ENCODE measurements at regions of chr14 and their contacts with region 1.

Region 1: DNA sequence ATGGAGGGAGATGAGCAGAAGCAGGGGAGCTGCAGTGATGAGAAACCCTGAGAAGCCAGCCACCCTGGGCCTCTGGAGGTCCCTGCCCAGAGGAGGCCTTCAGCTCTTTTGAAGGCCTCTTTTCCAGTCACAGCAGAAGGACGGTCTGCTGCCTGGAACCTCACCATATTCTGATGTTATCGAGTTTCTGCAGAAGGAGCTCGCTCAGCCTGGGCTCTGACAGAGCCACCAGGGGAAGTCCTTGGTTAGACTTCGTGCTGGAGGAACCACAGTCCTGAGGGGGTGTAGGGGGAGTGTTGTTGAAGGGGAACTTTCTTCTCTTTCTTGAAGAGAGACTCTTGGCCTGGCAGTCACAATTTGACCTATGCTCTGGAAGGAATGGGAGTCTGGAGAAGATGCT is 25.1 kb upstream of the BATF start:
- DNase-seq: no peak
- H3K4me3 Mint-ChIP-seq: no peak overlapping the region
- H3K27ac Mint-ChIP-seq: peak overlapping the region; percentile 76
- H3K4me1 Mint-ChIP-seq: peaks cover 44% of the 10 kb centered on the region
- H3K27me3 Mint-ChIP-seq: no peaks in the 10 kb centered on the region

Region 2: DNA sequence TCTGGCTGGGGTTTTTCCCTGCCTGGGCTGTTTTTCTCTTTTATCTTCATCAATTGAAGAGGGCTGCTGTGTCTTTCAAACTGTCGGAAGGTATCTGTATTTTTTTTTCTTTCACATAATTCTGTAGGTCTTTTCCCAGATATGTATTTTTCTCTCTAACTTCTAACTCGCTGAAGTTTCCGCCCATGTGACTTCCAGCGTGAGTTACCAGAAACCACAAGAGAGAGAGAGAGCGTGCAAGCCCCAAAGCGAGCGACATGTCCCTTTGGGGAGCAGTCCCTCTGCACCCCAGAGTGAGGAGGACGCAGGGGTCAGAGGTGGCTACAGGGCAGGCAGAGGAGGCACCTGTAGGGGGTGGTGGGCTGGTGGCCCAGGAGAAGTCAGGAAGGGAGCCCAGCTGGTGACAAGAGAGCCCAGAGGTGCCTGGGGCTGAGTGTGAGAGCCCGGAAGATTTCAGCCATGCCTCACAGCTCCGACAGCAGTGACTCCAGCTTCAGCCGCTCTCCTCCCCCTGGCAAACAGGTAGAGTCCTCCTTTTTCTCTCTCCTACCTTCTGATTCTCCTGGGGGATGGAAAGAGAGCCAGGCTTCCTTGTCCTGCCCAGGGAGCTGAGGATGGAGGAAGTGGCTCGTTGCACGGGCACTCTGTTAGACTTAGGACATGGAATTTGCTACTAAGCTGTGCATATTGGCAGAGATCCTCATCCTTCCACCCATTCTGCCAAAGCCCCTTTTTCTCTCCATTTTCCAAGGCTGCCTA is 25.2 kb after region 1 on chr14 and contains the start of gene BATF:
- CTCF ChIA-PET with region 1: interaction called, 11 read pairs
- POLR2A ChIA-PET with region 1: no interaction called
- DNase-seq: peak; percentile 88
- H3K4me3 Mint-ChIP-seq: peak within 1 kb of the TSS; percentile 93
- H3K27ac Mint-ChIP-seq: peak within 1 kb of the TSS; percentile 96
- H3K4me1 Mint-ChIP-seq: peaks cover 78% of the 10 kb centered on the region
- H3K27me3 Mint-ChIP-seq: no peaks in the 10 kb centered on the region
- total RNA-seq, gene BATF: 39.4 to 41.0 TPM